PC-3 (cell line): ENCODE measurements at regions of chr16 and their contacts with region 1.

Region 1: GRCh38 chr16:68704232-68704867 is 32.7 kb upstream of the CDH1 start:
- DNase-seq: peak; percentile 87
- ATAC-seq: peak; percentile 79
- H3K4me3 ChIP-seq: no peak overlapping the region
- H3K27ac ChIP-seq: no peak overlapping the region
- H3K4me1 ChIP-seq: peaks cover 18% of the 10 kb centered on the region
- H3K27me3 ChIP-seq: no peaks in the 10 kb centered on the region
- CTCF ChIP-seq: peak; percentile 79

Region 2: DNA sequence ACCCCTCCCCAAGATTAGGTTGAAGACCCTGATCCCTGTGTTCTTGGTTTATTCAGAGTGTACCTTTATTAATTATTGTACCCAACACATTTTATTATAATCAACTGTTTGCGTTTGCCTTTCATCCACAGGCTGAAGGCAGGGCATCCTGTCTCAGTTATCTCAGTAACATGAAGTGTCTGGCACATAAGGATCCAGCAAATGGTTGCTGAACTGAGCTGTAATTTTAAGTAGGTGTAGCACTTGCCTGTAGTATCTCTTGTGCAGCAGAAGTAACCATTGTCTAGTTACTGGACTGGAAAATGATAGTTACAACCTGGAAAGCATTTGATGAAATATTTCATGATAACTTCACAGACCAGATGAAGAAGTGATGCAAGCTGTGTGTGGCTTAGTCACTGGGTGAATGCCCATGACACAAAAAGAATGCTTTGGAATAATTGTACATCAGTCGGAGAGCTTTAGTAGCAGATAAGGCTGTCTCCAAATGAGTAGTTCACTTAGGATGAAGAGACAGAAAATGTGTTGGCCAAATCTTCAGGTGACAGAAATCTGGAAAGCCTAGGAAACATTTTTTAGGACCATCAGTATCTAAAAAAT is 525.1 kb before region 1 on chr16:
- CTCF ChIA-PET with region 1: no interaction called
- POLR2A ChIA-PET with region 1: no interaction called
- intact Hi-C with region 1: no loop called
- DNase-seq: no peak
- ATAC-seq: no peak
- H3K4me3 ChIP-seq: no peak overlapping the region
- H3K27ac ChIP-seq: no peak overlapping the region
- H3K4me1 ChIP-seq: no peaks in the 10 kb centered on the region
- H3K27me3 ChIP-seq: no peaks in the 10 kb centered on the region
- CTCF ChIP-seq: no peak

Region 3: GRCh38 chr16:68528686-68529379 is 175.5 kb before region 1 on chr16:
- CTCF ChIA-PET with region 1: no interaction called
- POLR2A ChIA-PET with region 1: no interaction called
- intact Hi-C with region 1: loop called (anchors 5 kb)
- DNase-seq: peak; percentile 69
- ATAC-seq: peak; percentile 71
- H3K4me3 ChIP-seq: peak overlapping the region; percentile 85
- H3K27ac ChIP-seq: no peak overlapping the region
- H3K4me1 ChIP-seq: peaks cover 12% of the 10 kb centered on the region
- H3K27me3 ChIP-seq: no peaks in the 10 kb centered on the region
- CTCF ChIP-seq: peak; percentile 78

Region 4: GRCh38 chr16:68564367-68564985 is 139.9 kb before region 1 on chr16:
- CTCF ChIA-PET with region 1: no interaction called
- POLR2A ChIA-PET with region 1: no interaction called
- intact Hi-C with region 1: no loop called
- DNase-seq: no peak
- ATAC-seq: no peak
- H3K4me3 ChIP-seq: no peak overlapping the region; the same call in 1 of the 2 replicates
- H3K27ac ChIP-seq: no peak overlapping the region
- H3K4me1 ChIP-seq: no peaks in the 10 kb centered on the region
- H3K27me3 ChIP-seq: no peaks in the 10 kb centered on the region
- CTCF ChIP-seq: no peak

Region 5: DNA sequence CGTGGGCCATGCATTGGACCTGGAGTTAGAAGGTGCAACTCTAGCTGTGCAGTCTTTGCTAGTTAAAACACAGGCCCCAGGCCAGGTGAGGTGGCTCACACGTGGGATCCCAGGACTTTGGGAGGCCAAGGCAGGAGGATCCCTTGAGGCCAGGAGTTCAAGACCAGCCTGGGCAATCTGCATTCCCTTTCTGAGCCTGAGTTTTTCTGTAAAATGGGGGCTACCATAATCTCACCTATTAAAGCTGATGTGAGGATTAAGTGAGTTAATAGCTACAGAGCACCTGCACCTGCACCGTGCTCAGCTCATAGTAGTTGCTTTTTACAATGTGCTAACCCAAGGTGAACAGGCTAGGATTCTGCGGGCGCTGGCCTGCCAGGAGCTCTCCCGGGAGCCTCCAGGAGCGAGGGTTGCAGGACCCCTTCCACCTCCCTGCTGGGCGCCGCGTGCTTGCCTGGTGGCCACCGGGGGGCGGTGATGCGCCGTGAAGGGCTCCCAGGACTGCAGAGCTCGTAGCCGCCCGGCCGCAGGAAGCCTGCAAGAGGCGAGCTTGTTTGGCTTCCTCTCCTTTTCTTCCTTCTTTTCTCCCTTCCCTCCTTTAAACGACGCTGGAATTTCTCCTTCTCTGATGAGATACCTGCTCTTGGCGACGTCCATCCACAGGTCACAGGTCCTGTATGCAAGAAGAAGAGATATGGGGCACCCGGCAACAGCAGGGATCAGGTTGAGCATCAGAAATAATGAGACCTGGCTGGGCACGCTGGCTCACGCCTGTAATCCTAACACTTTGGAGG is 114.0 kb before region 1 on chr16:
- CTCF ChIA-PET with region 1: interaction called, 13 read pairs
- POLR2A ChIA-PET with region 1: no interaction called
- intact Hi-C with region 1: loop called (anchors 5 kb)
- DNase-seq: peak; percentile 67
- ATAC-seq: peak; percentile 100
- H3K4me3 ChIP-seq: peak overlapping the region; percentile 40; the same call in 1 of the 2 replicates
- H3K27ac ChIP-seq: no peak overlapping the region
- H3K4me1 ChIP-seq: peaks cover 2% of the 10 kb centered on the region; the same call in 1 of the 2 replicates
- H3K27me3 ChIP-seq: no peaks in the 10 kb centered on the region
- CTCF ChIP-seq: peak; percentile 81

Region 6: DNA sequence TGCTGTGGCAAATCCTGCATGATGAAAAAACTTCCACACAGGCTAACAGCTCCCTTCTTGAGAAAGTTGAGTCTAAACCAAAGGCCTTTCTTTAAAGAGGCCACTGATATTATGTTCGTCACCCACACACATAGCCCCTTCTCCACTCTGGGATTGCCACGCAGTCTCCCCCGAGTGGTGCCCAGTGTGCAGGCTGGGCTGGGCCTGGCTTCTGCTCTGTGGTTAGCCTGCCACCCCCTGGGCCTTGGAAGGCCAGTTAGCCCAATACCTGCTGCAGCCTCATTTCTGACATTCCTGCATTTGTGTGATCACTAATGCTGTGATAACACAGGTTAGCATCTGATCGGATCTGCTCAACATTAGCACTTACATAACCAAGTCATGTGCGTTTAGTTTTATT is 14.4 kb before region 1 on chr16:
- CTCF ChIA-PET with region 1: no interaction called
- POLR2A ChIA-PET with region 1: no interaction called
- intact Hi-C with region 1: no loop called
- DNase-seq: no peak
- ATAC-seq: peak; percentile 46
- H3K4me3 ChIP-seq: no peak overlapping the region
- H3K27ac ChIP-seq: no peak overlapping the region
- H3K4me1 ChIP-seq: no peaks in the 10 kb centered on the region
- H3K27me3 ChIP-seq: no peaks in the 10 kb centered on the region
- CTCF ChIP-seq: no peak; the same call in 1 of the 2 replicates

Region 7: GRCh38 chr16:68737046-68737729 is 32.8 kb after region 1 on chr16 and contains the start of gene CDH1:
- CTCF ChIA-PET with region 1: no interaction called
- POLR2A ChIA-PET with region 1: no interaction called
- intact Hi-C with region 1: loop called (anchors 1 kb)
- DNase-seq: peak; percentile 86
- ATAC-seq: peak; percentile 52
- H3K4me3 ChIP-seq: peak within 1 kb of the TSS; percentile 90
- H3K27ac ChIP-seq: peak within 1 kb of the TSS; percentile 57
- H3K4me1 ChIP-seq: peaks cover 30% of the 10 kb centered on the region
- H3K27me3 ChIP-seq: no peaks in the 10 kb centered on the region
- CTCF ChIP-seq: no peak
- total RNA-seq, gene CDH1: 100 and 124 TPM in 2 replicates

Region 8: GRCh38 chr16:68800257-68800875 is 96.0 kb after region 1 on chr16:
- CTCF ChIA-PET with region 1: no interaction called
- POLR2A ChIA-PET with region 1: no interaction called
- intact Hi-C with region 1: loop called (anchors 1 kb)
- DNase-seq: peak; percentile 85
- ATAC-seq: peak; percentile 92
- H3K4me3 ChIP-seq: no peak overlapping the region
- H3K27ac ChIP-seq: no peak overlapping the region
- H3K4me1 ChIP-seq: peaks cover 22% of the 10 kb centered on the region
- H3K27me3 ChIP-seq: no peaks in the 10 kb centered on the region
- CTCF ChIP-seq: peak; percentile 77

Region 9: GRCh38 chr16:68843482-68844210 is 139.3 kb after region 1 on chr16 and contains the start of gene TANGO6:
- CTCF ChIA-PET with region 1: no interaction called
- POLR2A ChIA-PET with region 1: no interaction called
- intact Hi-C with region 1: loop called (anchors 5 kb)
- DNase-seq: peak; percentile 79
- ATAC-seq: peak; percentile 83
- H3K4me3 ChIP-seq: peak within 1 kb of the TSS; percentile 89
- H3K27ac ChIP-seq: peak within 1 kb of the TSS; percentile 14; the same call in 1 of the 2 replicates
- H3K4me1 ChIP-seq: peaks cover 6% of the 10 kb centered on the region
- H3K27me3 ChIP-seq: no peaks in the 10 kb centered on the region
- CTCF ChIP-seq: peak; percentile 35; the same call in 1 of the 2 replicates
- total RNA-seq, gene TANGO6: 9.4 and 17.7 TPM in 2 replicates